ENCODE measurements at regions of chr10 and their contacts with region 1.

Region 1: DNA sequence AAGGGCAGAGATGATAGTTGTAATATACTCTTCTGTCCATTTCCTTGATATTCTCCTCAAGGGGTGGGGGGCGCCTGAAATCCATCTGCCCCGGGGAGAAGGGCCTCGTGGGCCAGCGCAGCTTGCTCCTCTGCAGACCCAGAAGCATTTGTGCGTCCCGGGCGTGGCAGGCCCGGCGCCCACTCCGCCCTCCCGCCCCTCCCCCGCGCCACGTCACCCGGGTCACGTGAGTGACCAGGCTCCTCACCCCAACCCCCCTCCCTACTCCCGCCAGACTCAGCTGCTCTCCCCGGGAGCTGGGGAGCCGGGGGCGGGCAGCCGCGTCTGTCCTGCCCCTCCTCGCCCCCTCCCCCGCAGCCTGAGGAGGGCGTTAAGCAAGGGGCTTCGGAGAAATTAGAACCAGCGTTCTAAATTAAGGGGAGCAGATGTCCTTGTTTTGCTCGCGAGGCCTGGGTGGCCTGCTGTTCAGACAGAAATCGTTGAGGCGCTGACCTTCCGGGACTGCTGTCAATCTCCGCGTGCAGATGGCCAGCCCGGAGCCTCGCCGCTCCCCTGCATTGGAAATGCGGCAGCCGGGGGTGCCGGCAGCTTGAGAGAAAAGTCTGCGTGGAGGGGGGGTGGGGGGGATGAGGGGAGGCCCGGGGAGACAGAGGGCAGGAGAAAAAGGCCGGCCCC is 102.1 kb upstream of the ZNF438 start:
- DNase-seq: peak; percentile 73 to 86 (median 78)
- H3K4me3 ChIP-seq: peak overlapping the region; percentile 43 to 74 (median 62)
- H3K27ac ChIP-seq: peak overlapping the region; percentile 78 to 98 (median 93)
- H3K27me3 ChIP-seq: no peaks in the 10 kb centered on the region
- CTCF ChIP-seq: peak in 7 of 56 donors; percentile 2 to 34 (median 16)

Region 2: DNA sequence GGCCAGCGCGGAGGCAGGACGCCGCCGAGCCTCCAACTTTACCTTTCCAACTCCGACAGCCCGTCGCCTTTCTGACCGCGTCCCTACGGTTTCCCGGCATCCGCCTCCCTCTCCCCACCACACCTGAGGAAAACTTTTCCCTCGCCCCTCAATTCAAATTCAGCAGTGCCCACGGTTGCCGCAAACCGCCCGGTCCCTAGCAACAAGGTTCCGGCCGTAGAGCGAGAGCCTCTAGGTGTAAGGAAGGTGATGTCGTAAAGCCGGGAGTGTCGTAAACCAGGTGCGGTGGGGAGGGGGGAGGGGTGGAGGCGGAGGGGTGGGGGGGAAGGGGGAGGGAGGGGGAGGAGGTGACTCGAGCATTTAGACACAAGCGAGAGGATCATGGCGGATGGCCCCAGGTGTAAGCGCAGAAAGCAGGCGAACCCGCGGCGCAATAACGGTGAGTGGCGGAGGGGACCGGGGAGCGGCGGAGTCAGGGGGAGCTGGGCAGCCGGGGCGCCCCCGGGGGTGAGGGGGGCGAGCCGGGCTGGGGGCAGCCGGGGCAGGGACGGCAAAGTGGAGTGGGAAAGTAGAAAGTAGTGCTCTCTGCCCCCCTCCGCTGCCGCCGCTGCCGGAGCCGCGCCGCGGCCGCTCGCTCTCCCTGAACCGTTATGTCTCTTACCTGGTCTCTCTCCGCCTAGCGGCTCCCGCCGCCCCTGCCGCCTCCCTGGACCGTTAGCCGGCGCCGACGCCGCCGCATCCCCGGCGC is 185.3 kb after region 1 on chr10 and contains the start of gene ZEB1:
- intact Hi-C with region 1: loop called in 1 of 2 experiments (anchors 10 kb)
- DNase-seq: peak; percentile 24 to 85 (median 60)
- H3K4me3 ChIP-seq: peak within 1 kb of the TSS; percentile 53 to 94 (median 81)
- H3K27ac ChIP-seq: peak within 1 kb of the TSS in 58 of 59 donors; percentile 48 to 96 (median 90)
- H3K27me3 ChIP-seq: peaks cover 0 to 39% (median 5%) of the 10 kb centered on the region in 45 donors
- CTCF ChIP-seq: peak in 34 of 56 donors; percentile 11 to 47 (median 30)
- total RNA-seq, gene ZEB1: 53.6 to 139 (median 89.0) TPM

Region 3: DNA sequence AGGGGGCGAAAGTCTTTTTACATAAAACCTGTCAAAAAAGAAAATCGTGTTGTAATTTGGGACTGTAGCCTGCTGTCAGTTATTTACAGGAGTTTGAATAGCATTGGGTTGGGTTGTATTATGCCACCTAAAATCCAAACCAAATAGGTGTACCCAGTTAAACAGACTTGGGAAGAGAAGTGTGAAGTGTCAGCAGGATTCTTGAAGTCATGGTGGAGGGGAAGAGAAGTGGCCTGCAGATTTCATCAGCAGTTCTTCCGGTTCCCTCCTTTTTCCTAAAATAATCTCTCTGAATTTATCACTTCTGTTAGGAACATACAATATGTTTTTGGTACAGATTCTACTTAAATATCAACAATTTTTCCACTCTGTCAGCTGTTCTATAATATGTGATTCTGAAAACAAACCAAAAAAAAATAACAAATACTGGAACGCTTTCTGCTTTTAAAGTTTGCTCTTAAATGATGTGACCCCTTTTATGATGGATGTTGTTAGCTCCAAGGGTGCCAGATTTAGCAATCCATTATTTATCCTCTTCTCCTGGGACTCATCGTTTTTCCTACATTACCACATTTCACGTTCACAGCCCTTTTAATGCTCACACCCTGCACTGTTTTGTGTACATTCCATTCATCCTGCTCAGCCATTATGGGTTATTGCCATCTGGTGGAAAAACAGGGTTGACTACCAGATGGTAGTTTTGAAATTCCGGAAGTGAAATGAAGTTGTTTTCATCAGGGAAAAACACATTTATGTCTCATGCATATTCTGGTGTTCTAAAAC is 813.6 kb after region 1 on chr10:
- intact Hi-C with region 1: loop called in 1 of 2 experiments (anchors 10 kb)
- DNase-seq: no peak
- H3K4me3 ChIP-seq: peak overlapping the region in 36 of 59 donors; percentile 0 to 41 (median 21)
- H3K27ac ChIP-seq: peak overlapping the region in 14 of 59 donors; percentile 4 to 58 (median 32)
- H3K27me3 ChIP-seq: no peaks in the 10 kb centered on the region
- CTCF ChIP-seq: peak in 55 of 56 donors; percentile 26 to 73 (median 49)

Measured in dorsolateral prefrontal cortex (tissue), 120 donors.